A673 (cell line): ENCODE measurements at regions of chr10 and their contacts with region 1.

Region 1: DNA sequence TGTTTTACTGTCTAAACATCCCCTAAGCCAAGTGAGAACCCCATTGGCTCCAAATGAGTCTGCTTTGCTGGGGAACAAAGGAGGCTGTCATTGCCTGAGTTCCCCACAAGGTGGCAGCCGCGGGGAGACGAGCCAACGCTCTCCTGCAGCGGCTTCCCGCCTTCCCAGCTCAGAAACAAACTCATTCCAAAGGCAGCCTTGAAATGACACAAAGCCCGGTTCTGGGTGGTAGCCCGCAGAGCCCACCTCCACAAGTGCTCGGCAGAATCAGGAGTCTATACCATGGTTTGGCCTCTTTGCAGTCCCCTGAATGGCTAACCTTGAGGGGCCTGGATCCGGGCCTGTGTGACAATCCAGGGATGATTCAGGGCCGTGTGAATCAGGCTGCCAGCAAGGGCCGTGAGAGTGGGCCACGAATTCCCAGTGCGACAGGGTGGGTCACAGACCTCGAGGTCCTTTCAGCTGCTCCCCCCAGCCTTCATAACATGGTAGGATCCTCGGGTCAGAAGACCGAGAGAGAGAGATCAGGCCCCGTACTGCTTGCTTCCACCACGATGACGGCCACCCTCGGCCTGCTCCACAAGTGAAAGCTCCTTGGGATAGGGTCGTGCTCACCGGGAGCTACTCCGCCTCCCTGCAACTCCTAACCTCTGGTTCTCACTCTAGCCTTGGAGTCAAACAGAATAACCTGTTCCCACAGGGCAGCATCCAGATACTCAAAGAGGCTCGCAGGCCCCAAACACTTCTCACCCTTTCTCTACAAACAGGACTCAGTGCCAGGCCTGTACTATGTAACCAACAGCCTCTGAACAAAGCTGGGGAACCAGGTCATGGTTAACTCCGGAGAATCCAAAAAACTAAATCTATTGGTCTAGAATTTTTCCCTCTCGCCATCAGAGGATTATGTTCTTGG is 79.6 kb downstream of the DLG5 start:
- DNase-seq: peak; percentile 88
- H3K4me3 ChIP-seq: no peak overlapping the region
- H3K27ac ChIP-seq: peak overlapping the region; percentile 58
- H3K4me1 ChIP-seq: peaks cover 16% of the 10 kb centered on the region
- H3K27me3 ChIP-seq: no peaks in the 10 kb centered on the region
- CTCF ChIP-seq: peak; percentile 93

Region 2: DNA sequence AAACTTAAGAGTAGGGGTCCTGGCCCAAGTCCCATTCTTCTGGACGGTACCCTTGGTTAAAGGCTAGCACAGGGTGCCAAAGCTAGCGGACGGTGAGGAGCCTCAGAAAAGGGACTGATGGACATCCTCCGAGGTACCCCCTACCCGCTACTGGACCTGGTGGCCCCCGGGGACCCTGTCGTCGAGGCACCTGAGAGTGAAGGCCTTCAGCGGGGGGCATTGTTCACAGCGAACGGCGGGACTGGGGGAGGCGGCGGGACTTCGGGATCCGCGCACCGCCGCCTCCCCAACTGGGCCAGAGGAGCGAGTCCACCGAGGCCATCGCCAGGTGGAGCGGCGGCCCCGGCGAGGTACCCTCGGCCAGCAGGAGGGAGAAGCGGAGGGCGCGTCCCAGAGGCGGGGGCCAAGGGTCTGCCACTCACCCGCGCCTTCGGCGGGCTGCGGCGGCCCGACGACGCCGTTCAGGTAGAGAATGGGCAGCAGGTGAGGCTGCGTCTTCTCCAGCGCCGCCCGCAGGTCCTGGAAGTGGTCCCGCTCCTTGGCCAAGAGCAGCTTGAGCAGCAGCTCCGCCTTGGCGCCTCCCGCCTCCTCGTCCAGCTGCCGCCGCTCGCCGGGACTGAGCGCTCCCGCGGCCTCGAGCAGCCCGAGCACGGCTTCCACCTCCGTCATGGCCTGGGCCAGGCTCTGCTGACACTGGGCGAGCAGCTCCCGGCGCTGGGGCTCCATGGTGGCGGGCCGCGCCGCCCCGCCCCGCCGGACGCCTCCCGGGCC is 79.0 kb after region 1 on chr10:
- CTCF ChIA-PET with region 1: no interaction called
- POLR2A ChIA-PET with region 1: no interaction called
- intact Hi-C with region 1: loop called (anchors 1 kb)
- DNase-seq: peak; percentile 42
- H3K4me3 ChIP-seq: peak overlapping the region; percentile 73
- H3K27ac ChIP-seq: peak overlapping the region; percentile 76
- H3K4me1 ChIP-seq: peaks cover 16% of the 10 kb centered on the region
- H3K27me3 ChIP-seq: no peaks in the 10 kb centered on the region
- CTCF ChIP-seq: no peak

Region 3: GRCh38 chr10:77983384-77984341 is 136.7 kb after region 1 on chr10:
- CTCF ChIA-PET with region 1: interaction called, 9 read pairs
- POLR2A ChIA-PET with region 1: no interaction called
- intact Hi-C with region 1: loop called (anchors 2 kb)
- DNase-seq: peak; percentile 91
- H3K4me3 ChIP-seq: no peak overlapping the region
- H3K27ac ChIP-seq: peak overlapping the region; percentile 62
- H3K4me1 ChIP-seq: peaks cover 29% of the 10 kb centered on the region
- H3K27me3 ChIP-seq: no peaks in the 10 kb centered on the region
- CTCF ChIP-seq: no peak

Region 4: DNA sequence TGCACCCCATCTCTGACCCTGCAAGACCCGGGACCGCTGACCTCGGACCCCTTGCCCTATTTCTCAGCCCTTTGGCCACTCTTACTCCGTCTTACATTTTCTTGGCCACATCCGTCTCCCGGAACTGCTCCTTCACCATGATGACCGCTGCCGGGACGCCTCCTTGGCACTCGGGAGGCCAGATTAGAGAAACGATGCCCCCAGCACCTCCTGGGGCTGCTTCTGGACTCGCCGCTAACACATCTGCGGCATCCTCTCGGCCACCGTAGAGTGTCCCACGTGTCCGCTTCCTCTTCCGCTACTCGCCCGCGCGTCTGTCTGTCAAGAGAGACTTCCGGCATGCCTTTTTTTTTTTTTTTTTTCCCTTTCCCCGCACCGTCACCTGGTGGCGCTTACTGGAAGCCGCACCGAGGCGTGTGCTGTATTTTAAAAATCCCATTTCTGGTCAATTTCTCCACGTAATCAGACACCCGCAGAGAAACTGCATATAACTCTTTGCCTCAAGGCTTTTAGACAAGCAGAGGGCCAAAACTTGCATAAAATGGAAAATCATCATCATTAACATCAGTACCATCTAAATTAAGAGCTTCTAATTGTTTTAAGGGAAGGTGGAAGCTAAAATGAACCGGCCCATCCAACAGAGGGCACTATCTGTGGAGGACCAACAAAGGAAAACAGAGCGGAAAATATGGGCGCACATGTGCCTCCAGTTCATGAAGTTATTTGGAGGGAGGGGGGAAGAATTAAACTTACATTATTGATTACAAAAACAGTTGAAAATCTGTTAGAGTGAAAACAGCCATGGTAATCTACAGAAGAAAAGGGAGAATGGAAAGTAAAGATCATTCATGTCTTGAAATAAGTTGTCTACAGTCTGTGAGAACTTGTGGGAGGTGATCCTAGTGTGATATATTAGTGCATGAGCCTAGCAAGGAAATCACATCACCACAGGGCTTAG is 182.6 kb after region 1 on chr10 and contains the start of gene POLR3A:
- CTCF ChIA-PET with region 1: no interaction called
- POLR2A ChIA-PET with region 1: no interaction called
- intact Hi-C with region 1: loop called (anchors 1 kb)
- DNase-seq: peak; percentile 98
- H3K4me3 ChIP-seq: peak within 1 kb of the TSS; percentile 96
- H3K27ac ChIP-seq: peak within 1 kb of the TSS; percentile 88
- H3K4me1 ChIP-seq: peaks cover 9% of the 10 kb centered on the region
- H3K27me3 ChIP-seq: no peaks in the 10 kb centered on the region
- CTCF ChIP-seq: peak; percentile 93
- total RNA-seq, gene POLR3A: 27.3 and 27.8 TPM in 2 replicates

Region 5: GRCh38 chr10:78134773-78135305 is 287.9 kb after region 1 on chr10:
- CTCF ChIA-PET with region 1: no interaction called
- POLR2A ChIA-PET with region 1: no interaction called
- intact Hi-C with region 1: no loop called
- DNase-seq: no peak
- H3K4me3 ChIP-seq: no peak overlapping the region
- H3K27ac ChIP-seq: no peak overlapping the region
- H3K4me1 ChIP-seq: no peaks in the 10 kb centered on the region
- H3K27me3 ChIP-seq: no peaks in the 10 kb centered on the region
- CTCF ChIP-seq: no peak